ENCODE measurements at regions of chr13 and their contacts with region 1.

Region 1: GRCh38 chr13:96817336-96817941 is 176.8 kb downstream of the OXGR1 start:
- DNase-seq: peak; percentile 6
- ATAC-seq: no peak
- H3K4me3 ChIP-seq: no peak overlapping the region
- H3K27ac ChIP-seq: no peak overlapping the region
- H3K4me1 ChIP-seq: no peaks in the 10 kb centered on the region
- H3K27me3 ChIP-seq: no peaks in the 10 kb centered on the region
- CTCF ChIP-seq: no peak
- EP300 ChIP-seq: no peak
- POLR2A ChIP-seq: no peak
- RAD21 ChIP-seq: 0 out of 2 replicates have a peak, but pooled peaks have one; percentile 13

Region 2: DNA sequence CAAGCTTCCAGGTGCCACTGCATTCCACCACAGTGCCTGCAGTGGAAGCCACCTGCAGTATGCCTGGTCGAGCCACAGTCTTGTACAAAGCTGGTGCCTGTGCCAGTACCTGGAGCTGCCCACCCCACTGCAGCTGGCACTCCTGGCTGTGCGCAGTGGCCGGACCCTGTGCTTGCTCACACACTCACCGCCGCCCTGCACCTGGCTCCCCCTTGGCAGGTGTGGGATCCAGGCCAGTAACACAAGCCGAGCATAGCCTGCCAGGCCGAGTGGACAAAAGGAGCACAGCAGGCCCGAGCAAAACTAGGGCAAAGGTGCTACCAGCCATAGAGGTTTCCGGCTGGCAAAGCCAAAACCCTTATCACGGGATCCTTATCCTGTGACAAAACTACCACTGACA is 782.8 kb before region 1 on chr13:
- CTCF ChIA-PET with region 1: no interaction called
- POLR2A ChIA-PET with region 1: no interaction called
- in situ Hi-C with region 1: loop called (anchors 10 kb)
- intact Hi-C with region 1: no loop called
- DNase-seq: no peak
- ATAC-seq: no peak; the same call in 1 of the 3 replicates
- H3K4me3 ChIP-seq: no peak overlapping the region
- H3K27ac ChIP-seq: no peak overlapping the region
- H3K4me1 ChIP-seq: no peaks in the 10 kb centered on the region; the same call in 1 of the 2 replicates
- H3K27me3 ChIP-seq: no peaks in the 10 kb centered on the region
- CTCF ChIP-seq: no peak
- EP300 ChIP-seq: no peak
- POLR2A ChIP-seq: no peak
- RAD21 ChIP-seq: no peak

Region 3: GRCh38 chr13:96141027-96141426 is 676.4 kb before region 1 on chr13:
- CTCF ChIA-PET with region 1: no interaction called
- POLR2A ChIA-PET with region 1: no interaction called
- in situ Hi-C with region 1: loop called (anchors 10 kb)
- intact Hi-C with region 1: loop called (anchors 5 kb)
- DNase-seq: peak; percentile 20
- ATAC-seq: no peak
- H3K4me3 ChIP-seq: no peak overlapping the region
- H3K27ac ChIP-seq: no peak overlapping the region
- H3K4me1 ChIP-seq: no peaks in the 10 kb centered on the region
- H3K27me3 ChIP-seq: no peaks in the 10 kb centered on the region
- CTCF ChIP-seq: peak; percentile 32; the same call in 1 of the 2 replicates
- EP300 ChIP-seq: no peak
- POLR2A ChIP-seq: no peak
- RAD21 ChIP-seq: no peak

Region 4: DNA sequence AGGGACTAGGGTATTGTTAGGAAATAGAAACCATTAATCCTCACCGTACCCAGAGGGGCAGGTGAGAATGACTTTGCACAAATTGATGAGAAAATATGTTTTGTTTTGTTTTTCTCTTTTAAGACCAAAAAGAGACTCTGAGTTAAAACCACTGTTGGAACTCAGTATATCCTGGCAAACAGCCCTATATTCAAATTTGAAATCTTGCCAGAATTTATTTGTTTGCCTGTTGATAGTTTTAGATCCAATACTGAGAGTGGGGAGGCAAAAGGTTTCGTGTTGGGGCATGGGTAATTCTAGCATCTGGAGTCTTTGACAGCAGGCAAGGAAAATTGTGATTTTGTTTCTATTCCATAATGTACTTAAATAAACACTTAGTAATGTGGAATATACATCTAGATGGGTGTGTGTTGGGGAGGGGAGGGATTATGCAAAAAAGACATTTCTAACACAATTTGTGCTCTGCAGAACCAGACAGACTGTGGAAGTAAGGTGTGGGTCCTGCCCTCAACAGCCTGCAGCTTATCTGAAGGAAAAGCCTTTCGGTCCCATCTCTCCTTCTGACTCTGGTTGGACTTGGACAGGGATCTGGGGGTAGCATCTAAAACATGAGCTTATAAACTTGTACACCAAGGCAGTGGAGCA is 13.9 kb before region 1 on chr13:
- CTCF ChIA-PET with region 1: no interaction called
- POLR2A ChIA-PET with region 1: no interaction called
- in situ Hi-C with region 1: no loop called
- intact Hi-C with region 1: no loop called
- DNase-seq: no peak
- ATAC-seq: no peak
- H3K4me3 ChIP-seq: no peak overlapping the region
- H3K27ac ChIP-seq: no peak overlapping the region
- H3K4me1 ChIP-seq: no peaks in the 10 kb centered on the region
- H3K27me3 ChIP-seq: peaks cover 0 to 2% of the 10 kb centered on the region in 2 experiments; a peak in 1 of 5 replicates
- CTCF ChIP-seq: no peak
- EP300 ChIP-seq: no peak
- POLR2A ChIP-seq: no peak
- RAD21 ChIP-seq: no peak

Measured in HepG2 (cell line).